ENCODE measurements at regions of chr22 and their contacts with region 1.

Region 1: DNA sequence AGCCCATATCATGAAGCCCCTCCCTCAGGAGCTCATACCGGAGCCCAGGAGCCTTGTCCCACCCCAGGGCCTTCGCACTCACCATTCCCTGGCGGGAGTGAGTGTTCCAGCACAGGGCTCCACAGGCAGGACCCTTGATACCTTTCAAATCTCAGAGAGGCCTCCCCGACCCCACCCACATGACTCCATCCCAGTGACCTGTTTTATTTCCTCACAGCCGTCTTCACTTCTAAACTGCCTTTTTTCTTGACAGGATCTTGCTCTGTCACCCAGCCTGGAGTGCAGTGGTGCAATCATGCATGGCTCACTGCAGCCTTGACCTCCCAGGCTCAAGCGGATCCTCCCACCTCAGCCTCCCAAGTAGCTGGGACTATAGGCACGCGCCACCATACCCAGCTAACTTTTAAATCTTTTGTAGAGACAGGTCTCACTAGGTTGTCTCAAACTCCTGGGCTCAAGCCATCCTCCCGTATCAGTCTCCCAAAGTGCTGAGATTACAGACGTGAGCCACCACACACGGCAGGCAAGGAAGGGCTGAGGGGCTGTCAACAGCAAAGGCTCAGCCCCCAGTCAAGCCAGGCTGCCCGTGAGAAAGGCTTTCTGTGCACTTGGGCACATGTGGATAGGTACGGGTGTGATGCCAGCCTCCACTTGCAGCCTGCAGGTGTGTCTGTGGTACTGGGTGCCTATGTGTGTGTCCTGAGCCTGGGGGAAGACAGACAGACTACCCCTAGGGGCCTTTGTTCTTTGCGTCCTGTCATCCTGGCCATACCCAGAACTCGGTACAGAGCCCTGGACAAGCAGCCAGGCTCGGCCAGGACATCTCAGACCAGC is 9.3 kb downstream of the RPL3 start:
- DNase-seq: no peak
- ATAC-seq: no peak
- H3K4me3 ChIP-seq: no peak overlapping the region
- H3K27ac ChIP-seq: no peak overlapping the region
- H3K4me1 ChIP-seq: peaks cover 0 to 20% (median 4%) of the 10 kb centered on the region in 4 donors
- H3K27me3 ChIP-seq: no peaks in the 10 kb centered on the region
- CTCF ChIP-seq: no peak
- POLR2A ChIP-seq: no peak

Region 2: DNA sequence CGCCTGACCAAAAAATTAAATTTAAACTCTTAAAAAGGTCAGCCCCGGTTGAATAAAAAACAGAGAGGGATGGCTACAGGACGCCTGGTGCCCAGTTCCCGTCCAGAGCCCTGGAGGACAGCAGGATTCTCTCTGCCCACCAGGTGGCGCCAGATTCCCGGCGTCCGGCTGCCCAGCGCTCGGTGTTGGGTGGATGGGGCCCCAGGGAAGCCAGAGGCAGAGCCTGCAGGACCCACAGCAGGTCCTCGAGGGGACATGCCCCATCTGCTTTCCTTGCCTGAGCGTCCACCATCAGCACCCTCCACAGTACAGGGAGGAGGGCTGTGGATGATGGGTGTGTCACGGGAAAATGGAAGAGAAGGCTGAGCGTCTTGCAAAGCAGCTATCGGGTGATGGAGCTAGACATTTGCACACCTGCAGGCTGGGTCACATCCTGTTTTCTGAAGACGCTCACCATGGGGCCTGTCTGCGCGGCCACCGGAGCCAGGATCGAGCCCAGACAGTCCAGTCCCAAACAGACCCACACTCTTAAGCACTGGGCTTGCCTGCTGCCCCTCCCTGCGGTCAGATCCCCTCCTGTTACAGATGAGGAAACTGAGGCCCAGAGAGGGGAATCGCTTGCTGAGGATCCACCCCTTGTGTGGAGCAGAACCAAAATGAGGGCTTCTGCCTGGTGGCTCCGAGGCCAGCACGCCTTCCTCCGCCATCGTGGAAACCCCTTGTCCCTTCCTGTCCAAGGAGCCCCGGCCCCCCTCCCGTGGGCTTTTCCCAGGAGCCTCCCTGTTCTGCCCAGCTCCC is 139.1 kb before region 1 on chr22:
- intact Hi-C with region 1: loop called (anchors 5 kb)
- DNase-seq: peak; percentile 85 to 88 (median 87)
- ATAC-seq: peak; percentile 79 to 88 (median 84)
- H3K4me3 ChIP-seq: no peak overlapping the region
- H3K27ac ChIP-seq: no peak overlapping the region
- H3K4me1 ChIP-seq: peaks cover 0 to 22% (median 8%) of the 10 kb centered on the region in 4 donors
- H3K27me3 ChIP-seq: no peaks in the 10 kb centered on the region
- CTCF ChIP-seq: peak; percentile 96 to 99 (median 98)
- POLR2A ChIP-seq: no peak